CD4-positive, alpha-beta memory T cell (primary cell): ENCODE measurements at regions of chr17 and their contacts with region 1.

Region 1: DNA sequence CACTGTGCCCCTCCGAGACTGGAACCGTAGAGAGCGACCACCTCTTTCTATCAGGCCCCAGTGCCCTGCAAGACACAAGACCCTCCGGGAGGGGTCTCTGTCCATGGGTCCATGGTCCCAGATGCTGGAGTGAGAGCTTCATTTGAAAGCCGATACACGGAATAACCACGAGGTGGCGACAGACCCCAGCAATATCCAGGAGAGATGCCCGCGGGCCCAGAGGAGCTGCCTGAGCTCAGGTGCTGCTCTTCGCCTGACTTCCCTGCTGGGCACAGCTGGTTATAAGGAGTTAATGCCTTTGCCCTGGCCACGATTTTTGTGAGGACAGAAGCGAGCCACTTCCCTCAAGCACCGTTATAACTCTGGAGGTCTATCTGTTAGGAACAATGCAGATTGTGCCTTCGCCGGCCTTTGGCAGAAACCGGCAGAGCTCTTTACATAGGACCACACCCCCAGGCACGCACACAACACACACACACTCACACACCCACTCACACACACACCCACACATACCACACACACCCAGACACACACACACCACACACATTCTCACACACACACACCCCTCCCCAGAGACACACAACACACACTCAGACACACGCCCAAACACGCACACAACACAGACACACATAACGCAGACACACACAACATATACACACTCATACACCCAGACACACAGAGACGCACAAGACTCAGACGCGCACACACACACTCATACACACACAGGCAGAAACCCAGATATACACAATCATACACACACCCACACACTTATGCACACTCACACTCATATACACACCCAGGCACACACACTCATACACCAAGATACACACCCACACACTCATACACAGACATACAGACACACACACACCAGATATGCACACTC is 436.4 kb downstream of the SOX9 start:
- DNase-seq: peak; percentile 42 to 54 (median 46)
- H3K4me3 ChIP-seq: no peak overlapping the region
- H3K4me3 Mint-ChIP-seq: no peak overlapping the region
- H3K27ac ChIP-seq: no peak overlapping the region
- H3K27ac Mint-ChIP-seq: no peak overlapping the region
- H3K4me1 ChIP-seq: no peaks in the 10 kb centered on the region
- H3K4me1 Mint-ChIP-seq: peaks cover 0 to 4% (median under 1%) of the 10 kb centered on the region in 4 donors
- H3K27me3 ChIP-seq: no peaks in the 10 kb centered on the region
- H3K27me3 Mint-ChIP-seq: peaks cover 0 to 2% of the 10 kb centered on the region in 2 donors

Region 2: GRCh38 chr17:72191921-72192799 is 365.0 kb before region 1 on chr17:
- CTCF ChIA-PET with region 1: no interaction called
- POLR2A ChIA-PET with region 1: no interaction called
- intact Hi-C with region 1: no loop called
- DNase-seq: no peak
- H3K4me3 ChIP-seq: no peak overlapping the region
- H3K4me3 Mint-ChIP-seq: no peak overlapping the region
- H3K27ac ChIP-seq: no peak overlapping the region
- H3K27ac Mint-ChIP-seq: no peak overlapping the region
- H3K4me1 ChIP-seq: no peaks in the 10 kb centered on the region
- H3K4me1 Mint-ChIP-seq: no peaks in the 10 kb centered on the region
- H3K27me3 ChIP-seq: no peaks in the 10 kb centered on the region
- H3K27me3 Mint-ChIP-seq: peaks cover 2% of the 10 kb centered on the region in 2 donors

Region 3: DNA sequence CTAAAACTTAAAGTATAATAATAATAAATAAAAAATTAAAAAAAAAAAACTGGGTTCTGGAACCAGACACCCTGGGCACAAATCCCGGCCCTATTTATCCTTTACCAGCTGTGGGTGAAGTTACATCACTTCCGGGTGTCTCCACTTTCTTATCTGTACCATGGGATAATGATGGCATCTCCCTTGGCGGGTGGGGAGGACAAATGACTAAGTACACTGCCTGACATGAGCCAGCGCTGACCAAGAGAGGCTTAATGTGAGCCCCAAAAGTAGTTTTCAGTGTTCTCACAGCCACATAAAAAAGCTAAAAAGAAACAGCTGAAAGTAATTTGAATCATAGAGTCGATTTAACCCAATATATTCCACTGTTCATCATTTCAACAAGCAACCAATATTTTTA is 11.4 kb before region 1 on chr17:
- CTCF ChIA-PET with region 1: interaction called, 10 read pairs
- POLR2A ChIA-PET with region 1: no interaction called
- intact Hi-C with region 1: no loop called
- DNase-seq: no peak
- H3K4me3 ChIP-seq: no peak overlapping the region
- H3K4me3 Mint-ChIP-seq: no peak overlapping the region
- H3K27ac ChIP-seq: no peak overlapping the region
- H3K27ac Mint-ChIP-seq: no peak overlapping the region
- H3K4me1 ChIP-seq: peaks cover under 1% of the 10 kb centered on the region
- H3K4me1 Mint-ChIP-seq: peaks cover 0 to 4% (median 2%) of the 10 kb centered on the region in 4 donors
- H3K27me3 ChIP-seq: peaks cover under 1% of the 10 kb centered on the region
- H3K27me3 Mint-ChIP-seq: peaks cover 0 to 8% of the 10 kb centered on the region in 2 donors

Region 4: DNA sequence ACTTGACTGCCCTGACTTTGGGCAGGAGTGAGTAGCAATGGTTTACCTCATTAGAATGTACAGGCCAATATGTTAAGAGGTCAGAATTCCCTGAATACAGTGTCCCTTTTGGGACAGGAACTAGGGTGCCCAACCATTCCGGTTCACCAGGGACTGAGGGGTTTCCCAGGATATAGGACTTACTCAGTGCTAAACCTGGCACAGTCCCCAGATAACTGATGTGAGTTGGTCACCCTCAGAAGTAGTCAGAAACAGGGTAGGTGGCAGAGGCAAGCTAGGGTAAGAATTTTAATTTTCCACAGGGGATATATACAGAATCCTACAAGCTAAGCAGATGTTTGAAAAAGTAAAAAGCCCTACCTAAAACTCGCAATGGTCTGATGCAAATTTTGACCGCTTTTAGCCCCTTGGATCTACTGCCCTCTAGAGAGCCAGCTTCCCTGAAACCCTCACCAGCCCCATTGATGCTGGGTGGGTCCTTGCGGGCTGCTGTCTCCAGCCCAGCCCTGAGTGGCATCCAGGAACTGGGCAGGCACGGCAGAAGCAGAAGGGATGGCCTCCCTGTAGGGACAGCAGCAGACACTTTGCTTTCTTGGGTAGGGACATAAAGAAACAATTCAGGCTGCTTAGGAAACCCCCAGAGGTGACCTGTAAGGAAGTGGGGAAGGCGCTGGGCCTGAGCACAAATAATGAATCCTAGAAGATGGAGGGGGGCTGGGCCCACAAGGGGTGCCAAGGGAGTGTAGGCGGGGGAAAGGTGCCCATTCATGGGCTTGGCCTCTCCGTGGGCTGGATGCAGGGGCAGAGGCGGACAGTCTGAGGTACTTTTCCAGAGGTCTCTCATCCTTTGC is 100.5 kb after region 1 on chr17:
- CTCF ChIA-PET with region 1: interaction called, 8 read pairs
- POLR2A ChIA-PET with region 1: no interaction called
- intact Hi-C with region 1: loop called (anchors 1 kb)
- DNase-seq: no peak
- H3K4me3 ChIP-seq: no peak overlapping the region
- H3K4me3 Mint-ChIP-seq: no peak overlapping the region
- H3K27ac ChIP-seq: no peak overlapping the region
- H3K27ac Mint-ChIP-seq: no peak overlapping the region
- H3K4me1 ChIP-seq: no peaks in the 10 kb centered on the region
- H3K4me1 Mint-ChIP-seq: no peaks in the 10 kb centered on the region
- H3K27me3 ChIP-seq: no peaks in the 10 kb centered on the region
- H3K27me3 Mint-ChIP-seq: no peaks in the 10 kb centered on the region

Region 5: DNA sequence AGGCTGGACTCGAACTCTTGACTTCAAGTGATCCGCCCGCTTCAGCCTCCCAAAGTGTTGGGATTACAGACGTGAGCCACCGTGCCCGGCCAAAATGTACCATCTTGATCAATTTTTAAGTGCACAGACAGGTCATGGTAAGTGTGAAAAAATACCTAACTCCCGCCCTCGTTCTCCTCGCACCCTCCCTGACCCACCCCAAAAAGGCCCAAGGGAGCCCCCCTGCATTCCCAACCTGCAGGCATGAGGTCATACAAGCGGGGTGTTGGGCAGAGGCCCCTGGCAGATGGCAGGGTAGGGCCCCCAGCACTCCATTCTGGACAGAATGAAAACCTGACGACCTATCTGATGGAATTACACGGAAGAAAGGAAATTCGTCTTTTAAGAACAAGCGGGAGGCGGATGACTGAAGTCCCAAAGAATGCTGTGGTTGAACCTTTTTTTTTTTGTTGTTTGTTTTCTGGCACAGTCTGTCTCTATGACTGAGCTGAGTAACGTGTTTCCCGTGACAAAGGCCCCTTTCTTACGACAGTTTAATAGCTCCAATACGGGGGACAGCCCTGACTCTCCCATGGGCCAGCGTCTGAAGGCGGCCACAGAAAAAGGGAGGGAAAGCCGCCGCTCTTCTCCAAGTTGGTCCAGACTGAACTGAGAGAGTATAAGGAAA is 158.9 kb after region 1 on chr17:
- CTCF ChIA-PET with region 1: interaction called, 14 read pairs
- POLR2A ChIA-PET with region 1: interaction called, 3 read pairs
- intact Hi-C with region 1: no loop called
- DNase-seq: no peak
- H3K4me3 ChIP-seq: no peak overlapping the region
- H3K4me3 Mint-ChIP-seq: no peak overlapping the region
- H3K27ac ChIP-seq: no peak overlapping the region
- H3K27ac Mint-ChIP-seq: no peak overlapping the region
- H3K4me1 ChIP-seq: peaks cover 19% of the 10 kb centered on the region
- H3K4me1 Mint-ChIP-seq: peaks cover 16 to 28% (median 23%) of the 10 kb centered on the region in 4 donors
- H3K27me3 ChIP-seq: no peaks in the 10 kb centered on the region
- H3K27me3 Mint-ChIP-seq: no peaks in the 10 kb centered on the region

Region 6: GRCh38 chr17:72985881-72986720 is 428.9 kb after region 1 on chr17:
- CTCF ChIA-PET with region 1: interaction called, 33 read pairs
- POLR2A ChIA-PET with region 1: no interaction called
- intact Hi-C with region 1: loop called (anchors 5 kb)
- DNase-seq: peak in 4 of 5 donors; percentile 42 to 49 (median 44)
- H3K4me3 ChIP-seq: no peak overlapping the region
- H3K4me3 Mint-ChIP-seq: no peak overlapping the region
- H3K27ac ChIP-seq: no peak overlapping the region
- H3K27ac Mint-ChIP-seq: no peak overlapping the region
- H3K4me1 ChIP-seq: no peaks in the 10 kb centered on the region
- H3K4me1 Mint-ChIP-seq: peaks cover 0 to 3% (median under 1%) of the 10 kb centered on the region in 4 donors
- H3K27me3 ChIP-seq: no peaks in the 10 kb centered on the region
- H3K27me3 Mint-ChIP-seq: no peaks in the 10 kb centered on the region

Region 7: DNA sequence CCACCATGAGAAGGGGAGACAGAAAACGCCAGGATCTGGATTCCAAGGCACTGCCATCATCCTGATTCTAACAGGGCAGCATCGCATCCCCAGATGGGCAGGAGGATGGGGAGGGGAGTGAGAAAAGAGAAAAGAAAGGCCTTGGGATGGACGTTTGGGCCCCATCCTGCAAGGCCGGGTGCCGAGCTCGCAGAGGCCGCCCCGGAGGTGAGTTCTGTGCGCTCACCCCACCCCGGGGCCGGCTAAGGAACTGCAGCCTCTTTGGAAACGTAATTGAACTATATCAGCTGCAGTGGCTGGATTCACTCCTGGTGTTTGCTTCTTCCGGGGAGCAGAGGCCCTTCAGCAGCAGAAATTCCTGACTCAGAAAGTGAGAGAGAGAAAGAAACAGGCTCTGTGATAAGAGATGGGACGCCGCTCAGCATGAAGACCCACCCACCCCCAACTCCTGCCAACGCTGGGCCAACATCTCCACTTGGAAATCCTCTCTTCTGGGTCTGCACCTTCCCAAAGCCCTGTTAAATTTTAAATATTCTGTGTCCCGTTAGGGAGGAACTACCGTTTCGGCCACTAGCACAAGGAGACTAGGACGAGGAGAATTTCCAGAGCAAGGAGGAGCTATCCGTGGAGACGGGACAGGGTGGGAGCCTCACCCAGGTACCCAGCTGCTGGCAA is 599.1 kb after region 1 on chr17:
- CTCF ChIA-PET with region 1: interaction called, 37 read pairs
- POLR2A ChIA-PET with region 1: no interaction called
- intact Hi-C with region 1: loop called (anchors 1 kb)
- DNase-seq: peak in 4 of 5 donors; percentile 36 to 45 (median 37)
- H3K4me3 ChIP-seq: peak overlapping the region in 1 of 2 donors; percentile 5
- H3K4me3 Mint-ChIP-seq: no peak overlapping the region
- H3K27ac ChIP-seq: no peak overlapping the region
- H3K27ac Mint-ChIP-seq: no peak overlapping the region
- H3K4me1 ChIP-seq: peaks cover 5% of the 10 kb centered on the region
- H3K4me1 Mint-ChIP-seq: peaks cover 4 to 13% (median 10%) of the 10 kb centered on the region in 4 donors
- H3K27me3 ChIP-seq: peaks cover 7% of the 10 kb centered on the region
- H3K27me3 Mint-ChIP-seq: peaks cover 7 to 31% of the 10 kb centered on the region in 2 donors

Region 8: GRCh38 chr17:73492821-73493814 is 935.9 kb after region 1 on chr17:
- CTCF ChIA-PET with region 1: no interaction called
- POLR2A ChIA-PET with region 1: no interaction called
- intact Hi-C with region 1: no loop called
- DNase-seq: no peak
- H3K4me3 ChIP-seq: no peak overlapping the region
- H3K4me3 Mint-ChIP-seq: no peak overlapping the region
- H3K27ac ChIP-seq: no peak overlapping the region
- H3K27ac Mint-ChIP-seq: no peak overlapping the region
- H3K4me1 ChIP-seq: no peaks in the 10 kb centered on the region
- H3K4me1 Mint-ChIP-seq: peaks cover 0 to 5% (median under 1%) of the 10 kb centered on the region in 4 donors
- H3K27me3 ChIP-seq: no peaks in the 10 kb centered on the region
- H3K27me3 Mint-ChIP-seq: peaks cover 1 to 6% of the 10 kb centered on the region in 2 donors